Right ventricle myocardium superior (tissue), 1 donor: ENCODE measurements at regions of chr5 and their contacts with region 1.

Region 1: GRCh38 chr5:1090538-1090937 is 21.3 kb downstream of the SLC12A7 start:
- DNase-seq: peak; percentile 81
- ATAC-seq: peak; percentile 51

Region 2: GRCh38 chr5:997001-997474 is 93.5 kb before region 1 on chr5:
- intact Hi-C with region 1: no loop called
- DNase-seq: peak; percentile 52
- ATAC-seq: no peak

Region 3: GRCh38 chr5:1041225-1042129 is 49.1 kb before region 1 on chr5:
- intact Hi-C with region 1: no loop called
- DNase-seq: no peak
- ATAC-seq: no peak

Region 4: DNA sequence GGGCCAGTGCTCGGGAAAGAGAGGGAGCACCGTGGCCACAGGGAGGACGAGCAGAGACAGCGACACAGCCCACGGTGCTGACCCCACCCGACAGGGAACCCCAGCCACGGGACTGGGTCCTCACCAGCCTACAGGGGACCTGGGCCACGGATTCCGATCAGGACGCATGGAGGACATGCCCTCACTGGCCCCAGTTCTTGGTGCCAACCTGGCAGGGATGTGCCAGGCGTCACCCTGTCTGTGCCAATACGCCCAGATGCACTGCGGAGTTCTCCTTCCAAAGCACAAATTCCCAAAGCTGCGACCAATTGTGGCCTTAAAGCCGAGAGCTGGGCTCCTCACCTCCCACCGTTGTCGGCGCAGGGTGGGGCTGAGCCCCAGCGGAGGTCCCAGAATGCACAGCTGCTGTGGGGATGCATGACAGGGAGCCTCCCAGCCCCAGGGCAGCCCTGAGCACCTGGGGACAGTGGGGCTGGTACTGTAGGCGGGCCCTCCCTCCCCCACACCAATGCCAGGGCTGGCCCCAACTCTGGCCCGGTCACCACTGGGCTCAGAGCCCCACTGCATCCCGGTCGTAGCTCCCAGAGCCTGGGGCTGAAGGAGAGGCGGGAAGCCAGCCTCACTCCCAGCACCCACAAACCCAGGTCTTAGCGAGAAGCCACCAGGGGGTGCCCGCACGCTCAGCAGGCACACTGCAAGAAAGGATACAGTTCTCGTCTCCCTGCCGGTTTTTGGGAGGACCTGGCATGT is 37.7 kb before region 1 on chr5:
- intact Hi-C with region 1: loop called (anchors 5 kb)
- DNase-seq: peak; percentile 62
- ATAC-seq: peak; percentile 67